ENCODE measurements at regions of chr7 and their contacts with region 1.

Region 1: GRCh38 chr7:130010689-130011412 is 40.3 kb downstream of the ZC3HC1 start:
- DNase-seq: peak; percentile 88
- ATAC-seq: peak; percentile 73
- H3K4me3 ChIP-seq: no peak overlapping the region
- H3K27ac ChIP-seq: peak overlapping the region; percentile 22
- H3K4me1 ChIP-seq: peaks cover 10% of the 10 kb centered on the region
- H3K27me3 ChIP-seq: no peaks in the 10 kb centered on the region
- CTCF ChIP-seq: peak; percentile 94
- POLR2A ChIP-seq: peak; percentile 60
- RAD21 ChIP-seq: peak; percentile 94

Region 2: DNA sequence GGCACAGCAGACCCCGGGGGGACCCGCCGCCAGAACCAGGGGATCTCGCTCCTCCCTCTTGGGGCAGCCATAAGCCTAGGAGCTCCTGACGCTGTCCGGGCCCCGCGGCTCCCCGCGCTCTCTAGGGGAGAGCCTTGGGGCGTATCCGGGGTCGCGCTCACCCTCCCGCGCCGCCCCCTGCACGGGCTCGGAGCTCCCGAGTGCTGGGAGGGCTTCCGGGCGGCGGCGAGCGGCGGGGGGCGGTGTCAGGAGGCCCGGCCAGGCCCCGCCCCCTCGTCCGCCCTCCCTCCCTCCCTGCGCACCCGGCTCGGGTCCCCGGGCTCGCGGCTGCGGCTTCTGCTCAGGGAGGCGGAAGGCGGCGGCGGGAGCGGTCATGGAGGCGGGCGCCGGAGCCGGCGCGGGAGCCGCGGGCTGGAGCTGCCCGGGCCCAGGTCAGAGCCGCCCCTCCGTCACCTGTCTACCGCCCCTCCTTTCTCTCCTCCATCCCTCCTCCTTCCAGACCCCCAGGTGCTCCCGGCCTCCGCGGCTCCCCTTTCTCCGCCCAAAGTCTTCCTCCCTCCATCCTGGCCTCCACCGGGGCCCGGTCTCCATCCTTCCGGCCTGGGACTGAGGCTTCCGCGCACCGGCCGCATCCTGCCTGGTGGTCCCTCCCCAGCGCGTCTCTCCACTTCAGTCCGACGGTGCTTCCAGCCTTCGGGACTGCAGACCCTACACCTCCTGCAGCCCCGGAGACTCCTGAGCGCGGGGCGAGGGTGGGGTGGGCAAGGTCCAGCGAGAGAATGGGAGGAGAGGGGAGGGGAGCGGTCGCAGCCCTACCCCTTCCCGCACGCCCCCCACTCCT is 1219.5 kb before region 1 on chr7:
- CTCF ChIA-PET with region 1: no interaction called
- POLR2A ChIA-PET with region 1: no interaction called
- dilution Hi-C with region 1: no loop called
- in situ Hi-C with region 1: no loop called
- intact Hi-C with region 1: no loop called
- DNase-seq: peak; percentile 38
- ATAC-seq: peak; percentile 94
- H3K4me3 ChIP-seq: peak overlapping the region; percentile 95
- H3K27ac ChIP-seq: peak overlapping the region; percentile 32; the same call in 1 of the 2 replicates
- H3K4me1 ChIP-seq: peaks cover 9% of the 10 kb centered on the region
- H3K27me3 ChIP-seq: peaks cover 11% of the 10 kb centered on the region; the same call in 1 of the 2 replicates
- CTCF ChIP-seq: no peak
- POLR2A ChIP-seq: no peak
- RAD21 ChIP-seq: no peak

Region 3: GRCh38 chr7:129480674-129481365 is 530.0 kb before region 1 on chr7:
- CTCF ChIA-PET with region 1: no interaction called
- POLR2A ChIA-PET with region 1: no interaction called
- dilution Hi-C with region 1: no loop called
- in situ Hi-C with region 1: loop called (anchors 25 kb)
- intact Hi-C with region 1: loop called (anchors 5 kb)
- DNase-seq: peak; percentile 82
- ATAC-seq: peak; percentile 93
- H3K4me3 ChIP-seq: no peak overlapping the region
- H3K27ac ChIP-seq: peak overlapping the region; percentile 46; the same call in 1 of the 2 replicates
- H3K4me1 ChIP-seq: peaks cover 5% of the 10 kb centered on the region; the same call in 1 of the 2 replicates
- H3K27me3 ChIP-seq: no peaks in the 10 kb centered on the region
- CTCF ChIP-seq: no peak
- POLR2A ChIP-seq: no peak
- RAD21 ChIP-seq: no peak

Region 4: GRCh38 chr7:129494041-129494440 is 516.8 kb before region 1 on chr7:
- CTCF ChIA-PET with region 1: no interaction called
- POLR2A ChIA-PET with region 1: no interaction called
- dilution Hi-C with region 1: no loop called
- in situ Hi-C with region 1: loop called (anchors 25 kb)
- intact Hi-C with region 1: no loop called
- DNase-seq: peak; percentile 98
- ATAC-seq: peak; percentile 87
- H3K4me3 ChIP-seq: no peak overlapping the region
- H3K27ac ChIP-seq: no peak overlapping the region
- H3K4me1 ChIP-seq: peaks cover 7% of the 10 kb centered on the region; the same call in 1 of the 2 replicates
- H3K27me3 ChIP-seq: peaks cover 4% of the 10 kb centered on the region; the same call in 1 of the 2 replicates
- CTCF ChIP-seq: no peak
- POLR2A ChIP-seq: no peak
- RAD21 ChIP-seq: no peak

Region 5: DNA sequence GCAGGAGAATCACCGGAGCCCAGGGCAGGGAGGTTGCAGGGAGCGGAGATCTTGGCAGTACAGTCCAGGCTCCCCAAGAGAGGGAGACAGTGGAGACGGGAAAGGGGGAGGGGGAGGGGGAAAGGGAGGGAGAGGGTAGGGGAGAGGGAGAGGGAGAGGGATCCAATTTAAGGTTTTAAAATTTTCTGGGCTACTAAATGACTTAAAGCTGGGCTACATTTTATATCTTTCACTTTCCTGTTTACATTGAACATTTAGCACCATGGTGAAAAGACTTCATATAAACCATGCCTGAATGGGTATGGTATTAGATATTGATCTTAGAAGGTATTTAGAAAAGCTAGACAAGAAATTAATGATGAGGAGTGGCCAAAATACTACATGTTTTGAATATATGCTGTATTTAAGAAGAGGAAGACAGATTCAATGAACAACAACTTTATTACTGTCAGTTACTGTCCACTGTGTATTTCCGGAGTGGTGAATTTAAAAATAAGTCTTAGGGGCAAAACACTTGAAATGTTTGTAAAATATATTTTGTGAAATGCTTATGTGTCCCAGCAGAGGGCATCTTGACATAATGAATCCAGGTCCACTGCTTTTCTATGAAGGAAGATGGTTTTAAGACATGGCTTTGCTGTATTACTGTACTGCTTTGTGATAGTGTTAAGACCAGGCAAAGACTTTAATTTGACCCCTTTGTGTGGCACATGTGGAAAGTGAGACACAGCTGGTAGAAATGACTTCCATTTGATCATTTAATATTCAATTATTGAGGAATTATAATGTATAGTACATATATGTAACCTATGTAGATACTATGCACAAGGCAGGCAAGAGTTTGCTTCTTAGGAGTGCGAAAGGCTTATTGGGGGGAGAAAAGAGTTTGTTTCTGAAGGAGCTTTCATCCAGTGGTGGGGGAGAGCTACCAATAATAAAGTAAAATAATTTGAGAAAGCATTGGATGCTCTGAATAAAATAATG is 346.5 kb before region 1 on chr7:
- CTCF ChIA-PET with region 1: no interaction called
- POLR2A ChIA-PET with region 1: no interaction called
- dilution Hi-C with region 1: no loop called
- in situ Hi-C with region 1: loop called (anchors 5 kb)
- intact Hi-C with region 1: loop called (anchors 1 kb)
- DNase-seq: peak; percentile 83
- ATAC-seq: peak; percentile 93
- H3K4me3 ChIP-seq: no peak overlapping the region
- H3K27ac ChIP-seq: no peak overlapping the region
- H3K4me1 ChIP-seq: peaks cover 4% of the 10 kb centered on the region; the same call in 1 of the 2 replicates
- H3K27me3 ChIP-seq: no peaks in the 10 kb centered on the region
- CTCF ChIP-seq: peak; percentile 78
- POLR2A ChIP-seq: no peak
- RAD21 ChIP-seq: peak; percentile 88

Region 6: GRCh38 chr7:129825496-129826267 is 185.2 kb before region 1 on chr7:
- CTCF ChIA-PET with region 1: interaction called, 3 read pairs
- POLR2A ChIA-PET with region 1: interaction called, 4 read pairs
- dilution Hi-C with region 1: no loop called
- in situ Hi-C with region 1: loop called (anchors 5 kb)
- intact Hi-C with region 1: loop called (anchors 1 kb)
- DNase-seq: peak; percentile 43
- ATAC-seq: peak; percentile 87
- H3K4me3 ChIP-seq: peak overlapping the region; percentile 96
- H3K27ac ChIP-seq: peak overlapping the region; percentile 71
- H3K4me1 ChIP-seq: peaks cover 10% of the 10 kb centered on the region
- H3K27me3 ChIP-seq: no peaks in the 10 kb centered on the region
- CTCF ChIP-seq: peak; percentile 57
- POLR2A ChIP-seq: no peak
- RAD21 ChIP-seq: peak; percentile 64

Region 7: GRCh38 chr7:129958643-129959470 is 52.0 kb before region 1 on chr7:
- CTCF ChIA-PET with region 1: no interaction called
- POLR2A ChIA-PET with region 1: no interaction called
- dilution Hi-C with region 1: no loop called
- in situ Hi-C with region 1: no loop called
- intact Hi-C with region 1: no loop called
- DNase-seq: peak; percentile 91
- ATAC-seq: peak; percentile 93
- H3K4me3 ChIP-seq: no peak overlapping the region
- H3K27ac ChIP-seq: peak overlapping the region; percentile 58
- H3K4me1 ChIP-seq: peaks cover 15% of the 10 kb centered on the region
- H3K27me3 ChIP-seq: no peaks in the 10 kb centered on the region
- CTCF ChIP-seq: no peak
- POLR2A ChIP-seq: no peak
- RAD21 ChIP-seq: no peak

Region 8: GRCh38 chr7:130127821-130128317 is 117.0 kb after region 1 on chr7:
- CTCF ChIA-PET with region 1: no interaction called
- POLR2A ChIA-PET with region 1: no interaction called
- dilution Hi-C with region 1: no loop called
- in situ Hi-C with region 1: no loop called
- intact Hi-C with region 1: no loop called
- DNase-seq: peak; percentile 44
- ATAC-seq: peak; percentile 37; the same call in 1 of the 2 replicates
- H3K4me3 ChIP-seq: no peak overlapping the region
- H3K27ac ChIP-seq: no peak overlapping the region
- H3K4me1 ChIP-seq: no peaks in the 10 kb centered on the region
- H3K27me3 ChIP-seq: no peaks in the 10 kb centered on the region
- CTCF ChIP-seq: no peak
- POLR2A ChIP-seq: no peak
- RAD21 ChIP-seq: no peak

Region 9: GRCh38 chr7:130322587-130322986 is 311.7 kb after region 1 on chr7:
- CTCF ChIA-PET with region 1: no interaction called
- POLR2A ChIA-PET with region 1: no interaction called
- dilution Hi-C with region 1: no loop called
- in situ Hi-C with region 1: no loop called
- intact Hi-C with region 1: no loop called
- DNase-seq: no peak
- ATAC-seq: no peak
- H3K4me3 ChIP-seq: no peak overlapping the region
- H3K27ac ChIP-seq: no peak overlapping the region
- H3K4me1 ChIP-seq: no peaks in the 10 kb centered on the region
- H3K27me3 ChIP-seq: no peaks in the 10 kb centered on the region
- CTCF ChIP-seq: no peak
- POLR2A ChIP-seq: no peak
- RAD21 ChIP-seq: no peak